Psoas muscle (tissue), 8 donors: ENCODE measurements at regions of chr11 and their contacts with region 1.

Region 1: DNA sequence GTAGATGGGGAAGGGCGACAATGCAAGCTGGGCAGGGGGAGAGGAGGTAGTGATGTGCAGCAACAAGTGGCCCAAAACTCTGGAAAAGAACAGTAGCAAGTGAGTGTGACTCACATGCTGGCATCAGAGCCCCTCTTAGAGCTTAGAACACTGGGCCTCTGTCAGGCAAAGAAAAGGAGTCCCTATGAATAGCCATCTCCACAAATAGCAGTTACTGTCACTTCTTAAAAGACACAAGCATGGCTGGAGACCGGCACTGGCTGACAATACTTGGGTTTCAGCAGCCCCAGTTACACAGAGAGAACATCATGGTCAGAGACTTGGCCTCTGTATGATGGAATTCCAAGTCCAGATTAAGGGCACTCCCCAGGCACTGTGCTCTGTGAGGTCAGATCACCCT is 58.2 kb downstream of the PRCP start:
- DNase-seq: peak in 1 of 2 donors; percentile 62
- ATAC-seq: peak; percentile 84 to 98 (median 93)
- H3K4me3 ChIP-seq: no peak overlapping the region
- H3K27ac ChIP-seq: peak overlapping the region; percentile 61
- H3K4me1 ChIP-seq: peaks cover 9% of the 10 kb centered on the region
- H3K27me3 ChIP-seq: no peaks in the 10 kb centered on the region
- CTCF ChIP-seq: no peak

Region 2: GRCh38 chr11:82601711-82602110 is 240.3 kb before region 1 on chr11:
- intact Hi-C with region 1: no loop called
- DNase-seq: no peak
- ATAC-seq: no peak
- H3K4me3 ChIP-seq: no peak overlapping the region
- H3K27ac ChIP-seq: no peak overlapping the region
- H3K4me1 ChIP-seq: no peaks in the 10 kb centered on the region
- H3K27me3 ChIP-seq: no peaks in the 10 kb centered on the region
- CTCF ChIP-seq: no peak

Region 3: DNA sequence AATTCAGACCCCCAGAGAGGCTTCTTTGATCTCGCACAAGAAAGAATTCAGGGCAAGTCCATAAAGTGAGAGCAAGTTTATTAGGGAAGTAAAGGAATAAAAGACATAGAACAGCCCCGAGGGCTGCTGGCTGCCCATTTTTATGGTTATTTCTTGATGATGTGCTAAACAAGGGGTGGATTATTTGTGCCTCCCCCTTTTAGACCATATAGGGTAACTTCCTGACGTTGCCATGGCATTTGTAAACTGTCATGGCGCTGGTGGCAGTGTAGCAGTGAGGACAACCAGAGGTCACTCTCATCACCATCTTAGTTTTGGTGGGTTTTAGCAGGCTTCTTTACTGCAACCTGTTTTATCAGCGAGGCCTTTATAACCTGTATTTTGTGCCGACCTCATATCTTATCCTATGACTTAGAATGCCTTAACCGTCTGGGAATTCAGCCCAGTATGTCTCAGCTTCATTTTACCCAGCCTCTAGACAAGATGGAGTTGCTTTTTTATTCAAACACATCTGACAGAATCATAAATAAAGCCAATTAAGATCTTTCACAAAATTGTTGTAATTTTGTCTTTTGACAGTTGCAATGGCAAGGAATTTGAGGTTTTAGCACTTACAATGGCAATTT is 67.1 kb after region 1 on chr11:
- intact Hi-C with region 1: no loop called
- DNase-seq: no peak
- ATAC-seq: no peak
- H3K4me3 ChIP-seq: no peak overlapping the region
- H3K27ac ChIP-seq: no peak overlapping the region
- H3K4me1 ChIP-seq: no peaks in the 10 kb centered on the region
- H3K27me3 ChIP-seq: no peaks in the 10 kb centered on the region
- CTCF ChIP-seq: no peak

Region 4: DNA sequence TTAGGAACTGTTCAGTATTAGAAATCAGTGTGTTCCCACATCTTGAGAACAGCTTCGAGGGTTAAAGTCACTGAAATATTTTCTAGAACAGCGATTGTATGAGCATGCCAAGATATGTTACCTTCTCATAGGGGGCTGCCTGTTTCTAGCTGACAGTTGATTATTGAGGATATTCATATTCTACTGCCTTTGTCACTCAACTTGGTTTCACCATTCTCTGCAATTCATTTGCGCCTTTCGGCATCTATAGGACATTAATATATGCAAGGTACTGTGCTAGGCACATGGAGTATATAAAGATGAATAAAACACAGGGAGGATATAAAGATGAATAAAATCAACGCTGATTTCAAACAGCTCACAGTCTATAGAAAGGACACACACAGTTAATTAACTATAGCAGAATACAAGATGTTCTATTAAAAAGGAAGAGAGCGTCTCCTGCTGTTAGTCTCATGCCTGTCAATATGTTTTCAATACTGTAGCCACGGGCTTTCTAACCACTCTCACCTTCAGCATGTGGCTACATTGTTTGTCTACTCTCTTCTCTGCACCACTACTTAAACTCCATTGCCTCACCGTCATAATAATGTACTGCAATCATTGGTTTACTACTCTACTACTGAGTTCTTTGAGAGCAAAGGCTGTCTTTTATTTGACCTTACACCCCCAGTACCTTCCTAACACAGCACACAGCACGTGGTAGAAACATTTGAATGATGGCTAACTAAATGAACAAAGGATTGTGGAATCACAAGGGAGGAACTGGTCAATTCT is 147.8 kb after region 1 on chr11:
- intact Hi-C with region 1: loop called in 1 of 2 experiments (anchors 5 kb)
- DNase-seq: no peak
- ATAC-seq: no peak
- H3K4me3 ChIP-seq: no peak overlapping the region
- H3K27ac ChIP-seq: no peak overlapping the region
- H3K4me1 ChIP-seq: peaks cover 10% of the 10 kb centered on the region
- H3K27me3 ChIP-seq: no peaks in the 10 kb centered on the region
- CTCF ChIP-seq: no peak